Activated naive CD4-positive, alpha-beta T cell treated with anti-CD3 and anti-CD28 coated beads, Interleukin-2, amount 10 ng/mL, durations not matched to agents 7 days and 5 days (primary cell): ENCODE measurements at regions of chr1 and their contacts with region 1.

Region 1: GRCh38 chr1:109493805-109494539 is at the start of gene CYB561D1:
- DNase-seq: peak; percentile 92
- H3K4me3 Mint-ChIP-seq: peak within 1 kb of the TSS; percentile 97
- H3K27ac Mint-ChIP-seq: peak within 1 kb of the TSS; percentile 84
- H3K4me1 Mint-ChIP-seq: peaks cover 59% of the 10 kb centered on the region
- H3K27me3 Mint-ChIP-seq: no peaks in the 10 kb centered on the region

Region 2: GRCh38 chr1:109239580-109240095 is 254.3 kb before region 1 on chr1:
- CTCF ChIA-PET with region 1: no interaction called
- DNase-seq: peak; percentile 49
- H3K4me3 Mint-ChIP-seq: no peak overlapping the region
- H3K27ac Mint-ChIP-seq: no peak overlapping the region
- H3K4me1 Mint-ChIP-seq: peaks cover 10% of the 10 kb centered on the region
- H3K27me3 Mint-ChIP-seq: peaks cover 34% of the 10 kb centered on the region

Region 3: GRCh38 chr1:109466452-109467300 is 27.3 kb before region 1 on chr1 and contains the start of gene SYPL2:
- CTCF ChIA-PET with region 1: no interaction called
- DNase-seq: peak; percentile 43
- H3K4me3 Mint-ChIP-seq: peak within 1 kb of the TSS; percentile 58
- H3K27ac Mint-ChIP-seq: no peak within 1 kb of the TSS
- H3K4me1 Mint-ChIP-seq: peaks cover 11% of the 10 kb centered on the region
- H3K27me3 Mint-ChIP-seq: peaks cover 95% of the 10 kb centered on the region

Region 4: GRCh38 chr1:109483672-109484518 is 10.1 kb before region 1 on chr1 and contains the start of gene ATXN7L2:
- CTCF ChIA-PET with region 1: interaction called, 35 read pairs
- DNase-seq: peak; percentile 93
- H3K4me3 Mint-ChIP-seq: peak within 1 kb of the TSS; percentile 92
- H3K27ac Mint-ChIP-seq: peak within 1 kb of the TSS; percentile 82
- H3K4me1 Mint-ChIP-seq: peaks cover 38% of the 10 kb centered on the region
- H3K27me3 Mint-ChIP-seq: peaks cover 40% of the 10 kb centered on the region

Region 5: DNA sequence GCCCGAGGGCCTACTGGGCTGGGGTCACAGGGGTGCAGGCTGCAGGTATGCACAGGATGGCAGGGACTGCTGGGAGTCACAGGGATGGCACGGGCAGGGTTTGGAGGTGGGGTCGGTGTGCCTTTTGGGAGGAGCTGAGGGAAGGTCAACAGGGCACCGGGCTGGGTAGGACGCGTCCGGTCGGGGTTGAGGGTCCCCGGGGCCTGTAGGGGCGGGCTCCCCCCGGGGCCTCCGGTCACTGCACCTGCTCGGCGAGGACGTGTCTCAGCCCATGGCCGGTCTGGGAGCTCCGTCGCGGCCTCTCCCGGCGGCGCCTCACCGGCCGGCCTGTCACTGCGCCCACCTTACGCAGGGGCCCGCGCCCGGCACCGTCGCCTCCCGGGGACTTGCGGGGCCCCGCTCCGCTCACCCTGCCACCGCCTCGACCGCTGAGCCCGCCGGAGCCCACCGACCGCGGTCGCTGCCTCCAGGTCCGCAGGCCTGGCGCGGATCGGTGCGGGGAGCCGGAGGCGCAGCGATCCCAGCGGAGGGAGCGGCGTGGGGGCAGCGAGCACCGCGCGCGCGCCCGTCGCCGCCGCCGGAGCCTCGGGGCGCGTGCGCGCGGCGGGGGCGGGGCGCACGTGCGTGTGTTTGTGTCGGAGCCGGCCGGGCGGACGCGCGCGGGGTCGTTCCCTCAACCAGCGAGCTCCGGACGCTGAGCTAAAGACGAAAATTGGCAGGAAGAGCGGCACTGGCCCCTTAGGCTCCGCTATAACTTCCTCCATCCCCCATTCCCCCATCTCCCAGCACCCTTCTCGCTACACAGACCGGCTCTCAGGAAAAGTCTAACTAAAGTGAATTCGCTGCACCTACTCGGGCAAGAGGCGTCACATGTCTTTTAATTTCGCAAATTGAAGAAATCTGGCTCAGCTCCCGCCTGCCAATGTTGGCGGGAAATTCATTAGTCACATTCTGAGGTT is 15.5 kb after region 1 on chr1 and contains the start of gene AMIGO1:
- CTCF ChIA-PET with region 1: interaction called, 112 read pairs
- DNase-seq: peak; percentile 70
- H3K4me3 Mint-ChIP-seq: peak within 1 kb of the TSS; percentile 89
- H3K27ac Mint-ChIP-seq: peak within 1 kb of the TSS; percentile 67
- H3K4me1 Mint-ChIP-seq: peaks cover 56% of the 10 kb centered on the region
- H3K27me3 Mint-ChIP-seq: peaks cover 34% of the 10 kb centered on the region

Region 6: DNA sequence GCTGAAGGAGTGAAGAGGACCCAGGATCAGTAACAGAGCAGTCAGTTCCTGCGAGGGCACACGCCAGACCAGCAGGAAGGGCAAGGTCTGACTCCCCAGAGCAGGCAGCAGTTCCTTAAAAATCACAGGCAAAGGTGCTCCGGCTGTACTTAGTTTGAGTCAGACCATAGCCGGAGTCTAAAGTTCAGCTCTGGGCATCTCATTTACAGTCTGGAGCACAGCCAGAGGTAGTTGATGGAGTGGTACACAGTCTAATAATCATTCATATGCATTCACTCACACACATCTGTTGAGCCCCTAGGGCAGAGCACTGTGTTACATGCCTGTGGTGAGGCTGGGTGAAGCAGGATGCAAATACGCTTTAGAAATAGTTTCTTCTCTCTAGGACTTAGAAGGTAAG is 22.9 kb after region 1 on chr1:
- CTCF ChIA-PET with region 1: interaction called, 1,080 read pairs
- DNase-seq: no peak
- H3K4me3 Mint-ChIP-seq: no peak overlapping the region
- H3K27ac Mint-ChIP-seq: no peak overlapping the region
- H3K4me1 Mint-ChIP-seq: peaks cover 8% of the 10 kb centered on the region
- H3K27me3 Mint-ChIP-seq: peaks cover 23% of the 10 kb centered on the region